GM23248 (cell line): ENCODE measurements at regions of chr6 and their contacts with region 1.

Region 1: GRCh38 chr6:47407348-47408281 is 70.0 kb upstream of the CD2AP start:
- DNase-seq: no peak
- H3K4me3 ChIP-seq: no peak overlapping the region
- H3K27ac ChIP-seq: no peak overlapping the region
- H3K4me1 ChIP-seq: no peaks in the 10 kb centered on the region
- H3K27me3 ChIP-seq: no peaks in the 10 kb centered on the region

Region 2: GRCh38 chr6:46756469-46757206 is 651.0 kb before region 1 on chr6:
- in situ Hi-C with region 1: no loop called
- DNase-seq: no peak
- H3K4me3 ChIP-seq: no peak overlapping the region
- H3K27ac ChIP-seq: no peak overlapping the region
- H3K4me1 ChIP-seq: no peaks in the 10 kb centered on the region
- H3K27me3 ChIP-seq: no peaks in the 10 kb centered on the region

Region 3: DNA sequence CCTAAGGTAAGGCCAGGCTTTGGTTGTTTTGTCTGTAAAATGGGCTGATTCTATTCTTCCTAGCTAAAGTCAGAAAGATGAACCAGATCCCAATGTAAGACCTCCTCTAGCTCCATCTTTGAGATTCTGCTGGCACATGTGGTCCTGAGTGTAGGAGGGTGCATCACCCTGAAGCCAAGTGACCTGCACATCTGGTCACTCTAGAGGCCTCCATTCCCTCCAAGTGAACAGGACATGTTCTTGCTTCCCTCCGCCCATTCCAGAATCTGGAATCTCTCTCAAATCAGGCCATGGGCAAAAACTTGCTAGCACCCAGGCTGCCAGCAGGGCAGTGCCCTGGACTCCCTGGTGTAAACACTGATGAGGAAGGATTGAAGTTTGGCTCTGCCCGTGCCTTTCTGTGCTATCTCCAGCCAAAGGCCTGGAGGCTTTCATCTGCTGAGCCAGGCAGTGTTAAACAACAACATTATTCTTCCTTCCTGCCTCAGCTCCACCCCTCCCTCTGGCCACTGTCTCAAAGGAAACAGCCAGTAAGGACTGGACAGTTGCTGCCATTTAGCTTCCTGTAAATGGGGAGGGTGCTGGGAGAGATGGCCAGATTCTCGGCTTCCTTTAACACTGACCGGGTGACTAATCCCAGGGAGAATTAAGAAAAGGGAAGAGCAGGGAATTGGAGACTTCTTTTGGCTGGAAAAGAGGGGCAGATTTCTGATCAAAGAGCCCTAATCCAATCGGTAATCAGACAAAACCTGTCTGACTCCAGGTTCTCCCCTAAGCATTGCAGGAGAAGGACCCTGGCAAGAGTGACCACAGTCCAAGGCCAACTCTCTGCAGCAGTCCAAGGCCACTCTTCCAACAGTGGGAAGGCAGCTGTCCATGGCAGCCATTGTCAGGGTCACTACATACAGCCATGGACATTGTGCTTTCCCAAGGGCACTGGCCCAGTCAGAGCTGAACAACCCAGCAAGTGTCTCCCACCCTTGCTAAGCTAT is 346.0 kb before region 1 on chr6:
- in situ Hi-C with region 1: no loop called
- DNase-seq: peak; percentile 12
- H3K4me3 ChIP-seq: no peak overlapping the region
- H3K27ac ChIP-seq: no peak overlapping the region
- H3K4me1 ChIP-seq: no peaks in the 10 kb centered on the region
- H3K27me3 ChIP-seq: no peaks in the 10 kb centered on the region

Region 4: DNA sequence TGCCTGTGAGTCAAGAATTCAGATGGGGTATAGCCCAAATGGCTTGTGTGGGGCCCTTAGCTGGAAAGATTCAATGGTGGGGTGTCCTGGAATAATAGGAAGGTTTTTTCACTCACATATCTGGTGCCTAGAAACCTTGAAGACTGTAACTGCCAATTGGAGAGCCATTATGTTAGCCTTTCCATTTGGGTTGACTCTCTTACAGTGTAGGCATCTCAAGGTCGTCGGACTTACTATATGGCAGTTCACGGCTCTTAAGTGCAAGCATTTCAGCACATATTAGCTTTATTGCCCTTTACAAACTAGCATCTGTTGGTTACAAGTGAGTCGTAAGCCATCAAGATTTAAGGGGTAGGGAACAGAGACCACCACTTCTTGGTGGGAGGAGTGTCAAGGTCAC is 144.1 kb after region 1 on chr6:
- in situ Hi-C with region 1: no loop called
- DNase-seq: no peak
- H3K4me3 ChIP-seq: no peak overlapping the region
- H3K27ac ChIP-seq: no peak overlapping the region
- H3K4me1 ChIP-seq: no peaks in the 10 kb centered on the region
- H3K27me3 ChIP-seq: no peaks in the 10 kb centered on the region

Region 5: DNA sequence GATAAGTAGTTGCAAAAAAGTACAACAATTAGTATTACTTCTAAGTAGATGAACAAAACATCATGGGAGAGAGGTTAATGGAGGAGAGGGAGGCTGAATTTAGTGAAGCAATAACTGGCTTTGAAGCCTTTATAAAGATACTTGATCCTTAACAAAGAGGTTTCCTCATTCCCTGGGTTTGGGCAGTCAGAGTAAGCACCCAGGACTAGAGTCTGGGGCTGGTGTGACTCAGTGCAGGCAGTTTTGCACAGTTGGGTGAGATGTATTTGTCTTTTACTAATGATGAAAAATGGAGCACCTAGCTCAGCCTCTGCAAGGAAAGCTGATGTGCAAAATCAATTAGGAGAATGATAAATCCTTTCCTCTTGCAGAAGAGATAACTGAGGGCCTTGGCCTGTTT is 362.4 kb after region 1 on chr6:
- in situ Hi-C with region 1: loop called (anchors 10 kb)
- DNase-seq: no peak
- H3K4me3 ChIP-seq: no peak overlapping the region
- H3K27ac ChIP-seq: no peak overlapping the region
- H3K4me1 ChIP-seq: no peaks in the 10 kb centered on the region
- H3K27me3 ChIP-seq: 0 out of 2 replicates have a peak, but pooled peaks cover 3% of the 10 kb centered on the region